Mammary epithelial cell (primary cell): ENCODE measurements at regions of chrX and their contacts with region 1.

Region 1: DNA sequence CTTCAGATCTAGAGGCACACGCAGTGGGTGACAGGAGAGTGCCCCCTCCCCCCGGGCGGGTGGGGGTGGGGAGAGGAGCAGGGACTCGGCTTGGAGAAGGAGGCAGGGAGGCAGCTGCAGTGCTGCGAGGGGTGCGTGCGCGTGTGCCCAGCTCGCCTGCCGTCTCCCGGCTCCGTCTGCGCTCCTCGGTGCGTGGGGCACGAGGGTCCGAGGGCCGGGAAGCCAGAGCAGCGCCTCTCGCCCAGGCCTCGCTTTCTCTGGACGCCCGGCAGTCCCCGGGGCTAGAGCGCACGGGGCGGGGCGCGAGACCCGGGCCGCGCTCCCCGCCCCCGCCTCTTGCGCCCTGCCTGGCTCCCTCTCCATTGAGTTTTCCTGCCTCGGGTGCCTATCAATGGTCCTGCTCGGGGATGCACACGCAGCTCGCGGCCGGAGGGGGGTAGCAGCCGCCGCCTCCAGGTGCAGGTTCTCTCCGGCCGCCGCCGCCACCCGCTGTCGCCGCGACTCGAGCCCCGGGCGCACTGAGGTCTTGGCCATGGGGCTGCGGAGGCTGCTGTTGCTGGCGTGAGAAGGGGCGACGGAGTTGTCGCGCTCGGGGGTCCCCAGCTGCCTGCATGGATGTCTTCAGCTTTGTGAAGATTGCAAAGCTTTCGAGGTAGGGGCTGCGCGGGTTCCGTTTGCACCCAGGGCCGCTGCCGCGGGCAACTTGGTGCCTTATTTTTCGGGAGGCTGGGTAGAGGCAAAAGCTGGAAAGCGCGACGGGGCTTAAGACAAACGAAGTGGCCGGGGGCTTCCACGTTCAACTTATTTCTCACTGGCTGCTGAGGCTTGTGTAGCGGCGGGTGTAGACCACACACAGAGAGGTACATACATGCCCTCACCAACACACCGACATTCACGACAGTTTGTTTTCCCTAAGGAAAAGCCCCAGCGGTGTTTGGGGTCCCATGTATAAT is at the start of gene FRMPD4:
- DNase-seq: peak; percentile 43
- H3K4me3 ChIP-seq: peak within 1 kb of the TSS; percentile 46 to 56 (median 46)
- H3K27ac ChIP-seq: no peak within 1 kb of the TSS
- H3K4me1 ChIP-seq: peaks cover 8% of the 10 kb centered on the region
- H3K27me3 ChIP-seq: no peaks in the 10 kb centered on the region
- CTCF ChIP-seq: peak in 1 of 2 donors; percentile 42
- total RNA-seq, gene FRMPD4: 0.17 to 0.24 TPM

Region 2: DNA sequence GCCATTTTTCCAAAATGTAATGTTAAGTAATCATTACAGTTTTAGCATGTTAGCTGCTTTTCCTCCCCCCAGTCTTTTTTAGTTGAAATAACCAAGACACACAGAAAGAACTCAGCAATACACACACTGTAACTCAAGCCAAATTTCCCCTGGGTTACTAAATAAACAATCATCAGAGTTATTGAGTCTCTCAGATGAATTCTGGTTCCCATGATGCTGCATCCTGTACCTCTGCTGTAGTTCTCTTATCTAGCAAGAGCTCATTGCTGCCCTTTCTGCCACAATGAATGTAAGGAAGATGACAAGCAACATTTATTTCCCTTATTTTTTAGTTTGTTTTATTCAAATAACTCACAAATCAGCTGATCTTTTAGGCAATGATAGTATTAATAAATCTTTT is 658.0 kb before region 1 on chrX:
- CTCF ChIA-PET with region 1: no interaction called
- dilution Hi-C with region 1: no loop called
- in situ Hi-C with region 1: no loop called
- intact Hi-C with region 1: no loop called
- DNase-seq: no peak
- H3K4me3 ChIP-seq: no peak overlapping the region
- H3K27ac ChIP-seq: no peak overlapping the region
- H3K4me1 ChIP-seq: no peaks in the 10 kb centered on the region
- H3K27me3 ChIP-seq: peaks cover 5% of the 10 kb centered on the region
- CTCF ChIP-seq: no peak

Region 3: GRCh38 chrX:12245650-12246645 is 107.3 kb after region 1 on chrX:
- CTCF ChIA-PET with region 1: no interaction called
- dilution Hi-C with region 1: no loop called
- in situ Hi-C with region 1: no loop called
- intact Hi-C with region 1: no loop called
- DNase-seq: peak; percentile 71
- H3K4me3 ChIP-seq: no peak overlapping the region
- H3K27ac ChIP-seq: peak overlapping the region; percentile 30
- H3K4me1 ChIP-seq: peaks cover 11% of the 10 kb centered on the region
- H3K27me3 ChIP-seq: no peaks in the 10 kb centered on the region
- CTCF ChIP-seq: no peak

Region 4: DNA sequence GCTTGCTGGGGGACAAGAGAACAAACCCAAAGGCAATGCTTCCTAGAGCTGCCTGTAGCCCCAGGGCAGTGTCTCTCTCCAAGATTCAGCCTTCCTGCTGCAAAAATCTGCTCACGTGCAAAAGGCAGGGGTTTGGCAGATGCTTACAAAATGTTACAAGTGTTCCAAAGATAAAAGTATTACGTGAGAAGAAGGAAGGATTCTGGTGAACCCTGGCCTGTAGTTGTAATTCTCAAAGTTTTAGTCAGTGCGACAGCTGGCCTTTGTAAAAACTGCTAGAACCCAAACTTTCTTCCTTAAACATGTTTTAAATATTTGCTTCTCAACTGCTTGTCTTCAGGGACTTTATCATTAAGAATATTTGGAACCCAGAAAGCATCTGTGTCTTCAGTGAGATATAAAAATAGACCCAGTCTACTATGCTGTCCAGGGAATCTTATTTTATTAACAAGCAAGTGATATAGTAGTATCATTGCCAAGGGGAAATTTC is 231.9 kb after region 1 on chrX:
- CTCF ChIA-PET with region 1: no interaction called
- dilution Hi-C with region 1: no loop called
- in situ Hi-C with region 1: no loop called
- intact Hi-C with region 1: loop called (anchors 5 kb)
- DNase-seq: no peak
- H3K4me3 ChIP-seq: no peak overlapping the region
- H3K27ac ChIP-seq: no peak overlapping the region
- H3K4me1 ChIP-seq: peaks cover 22% of the 10 kb centered on the region
- H3K27me3 ChIP-seq: no peaks in the 10 kb centered on the region
- CTCF ChIP-seq: no peak